Activated CD4-positive, alpha-beta memory T cell treated with anti-CD3 and anti-CD28 coated beads for 36 hours (primary cell): ENCODE measurements at regions of chr3 and their contacts with region 1.

Region 1: GRCh38 chr3:149621218-149622005 is 36.4 kb downstream of the WWTR1 start:
- DNase-seq: peak; percentile 13
- H3K4me3 Mint-ChIP-seq: no peak overlapping the region
- H3K27ac Mint-ChIP-seq: no peak overlapping the region
- H3K4me1 Mint-ChIP-seq: peaks cover 15% of the 10 kb centered on the region
- H3K27me3 Mint-ChIP-seq: peaks cover 3% of the 10 kb centered on the region

Region 2: GRCh38 chr3:149575961-149576564 is 45.3 kb before region 1 on chr3:
- CTCF ChIA-PET with region 1: no interaction called
- POLR2A ChIA-PET with region 1: no interaction called
- intact Hi-C with region 1: loop called (anchors 1 kb)
- DNase-seq: peak; percentile 43
- H3K4me3 Mint-ChIP-seq: no peak overlapping the region
- H3K27ac Mint-ChIP-seq: no peak overlapping the region
- H3K4me1 Mint-ChIP-seq: peaks cover 38% of the 10 kb centered on the region
- H3K27me3 Mint-ChIP-seq: peaks cover 11% of the 10 kb centered on the region

Region 3: GRCh38 chr3:149581681-149582370 is 39.6 kb before region 1 on chr3:
- CTCF ChIA-PET with region 1: no interaction called
- POLR2A ChIA-PET with region 1: no interaction called
- intact Hi-C with region 1: loop called (anchors 1 kb)
- DNase-seq: peak; percentile 29
- H3K4me3 Mint-ChIP-seq: no peak overlapping the region
- H3K27ac Mint-ChIP-seq: no peak overlapping the region
- H3K4me1 Mint-ChIP-seq: peaks cover 16% of the 10 kb centered on the region
- H3K27me3 Mint-ChIP-seq: peaks cover 20% of the 10 kb centered on the region

Region 4: GRCh38 chr3:149657926-149658733 is 36.7 kb after region 1 on chr3 and contains the start of gene WWTR1:
- CTCF ChIA-PET with region 1: no interaction called
- POLR2A ChIA-PET with region 1: no interaction called
- intact Hi-C with region 1: loop called (anchors 2 kb)
- DNase-seq: peak; percentile 65
- H3K4me3 Mint-ChIP-seq: peak within 1 kb of the TSS; percentile 82
- H3K27ac Mint-ChIP-seq: no peak within 1 kb of the TSS
- H3K4me1 Mint-ChIP-seq: peaks cover 9% of the 10 kb centered on the region
- H3K27me3 Mint-ChIP-seq: peaks cover 51% of the 10 kb centered on the region
- total RNA-seq, gene WWTR1: 1.0 to 1.2 TPM

Region 5: DNA sequence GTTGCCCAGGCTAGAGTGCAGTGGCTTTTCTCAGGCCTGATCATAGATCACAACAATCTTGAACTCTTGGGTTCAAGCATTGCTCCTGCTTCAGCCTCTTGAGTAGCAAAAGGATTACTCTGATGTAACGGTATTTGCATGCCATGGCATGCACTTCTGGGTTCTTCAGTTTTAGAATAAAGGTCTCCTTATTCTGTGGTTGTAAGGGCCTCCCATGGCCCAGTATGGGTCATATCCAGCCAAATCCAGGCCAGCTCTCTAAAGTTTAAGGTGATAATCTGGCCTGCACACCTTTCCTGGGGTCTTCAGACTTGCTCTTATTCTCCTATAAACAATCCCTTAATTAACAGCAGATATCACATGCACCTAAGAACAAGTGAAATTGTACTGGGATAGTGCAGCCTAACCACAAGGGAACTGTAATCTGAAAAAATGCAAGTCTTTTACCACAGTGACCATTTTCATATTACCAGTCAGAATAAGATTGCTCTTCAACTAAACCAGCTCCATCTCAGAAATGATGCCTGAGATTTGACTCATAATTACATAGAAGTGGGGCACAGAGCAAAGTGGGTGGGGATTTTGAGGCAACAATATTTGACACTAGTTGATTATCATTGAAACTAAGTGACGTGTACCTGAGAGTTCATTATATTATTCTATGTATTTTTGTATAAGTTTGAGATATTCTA is 105.5 kb after region 1 on chr3:
- CTCF ChIA-PET with region 1: no interaction called
- POLR2A ChIA-PET with region 1: no interaction called
- intact Hi-C with region 1: loop called (anchors 2 kb)
- DNase-seq: peak; percentile 40
- H3K4me3 Mint-ChIP-seq: no peak overlapping the region
- H3K27ac Mint-ChIP-seq: no peak overlapping the region
- H3K4me1 Mint-ChIP-seq: peaks cover 8% of the 10 kb centered on the region
- H3K27me3 Mint-ChIP-seq: peaks cover 3% of the 10 kb centered on the region